BJ (cell line): ENCODE measurements at regions of chr1 and their contacts with region 1.

Region 1: GRCh38 chr1:31644560-31645273 is at the start of gene PEF1:
- DNase-seq: peak; percentile 78
- H3K4me3 ChIP-seq: peak within 1 kb of the TSS; percentile 93
- H3K27me3 ChIP-seq: no peaks in the 10 kb centered on the region
- CTCF ChIP-seq: no peak
- polyA plus RNA-seq, gene PEF1: 111 and 145 TPM in 2 replicates

Region 2: DNA sequence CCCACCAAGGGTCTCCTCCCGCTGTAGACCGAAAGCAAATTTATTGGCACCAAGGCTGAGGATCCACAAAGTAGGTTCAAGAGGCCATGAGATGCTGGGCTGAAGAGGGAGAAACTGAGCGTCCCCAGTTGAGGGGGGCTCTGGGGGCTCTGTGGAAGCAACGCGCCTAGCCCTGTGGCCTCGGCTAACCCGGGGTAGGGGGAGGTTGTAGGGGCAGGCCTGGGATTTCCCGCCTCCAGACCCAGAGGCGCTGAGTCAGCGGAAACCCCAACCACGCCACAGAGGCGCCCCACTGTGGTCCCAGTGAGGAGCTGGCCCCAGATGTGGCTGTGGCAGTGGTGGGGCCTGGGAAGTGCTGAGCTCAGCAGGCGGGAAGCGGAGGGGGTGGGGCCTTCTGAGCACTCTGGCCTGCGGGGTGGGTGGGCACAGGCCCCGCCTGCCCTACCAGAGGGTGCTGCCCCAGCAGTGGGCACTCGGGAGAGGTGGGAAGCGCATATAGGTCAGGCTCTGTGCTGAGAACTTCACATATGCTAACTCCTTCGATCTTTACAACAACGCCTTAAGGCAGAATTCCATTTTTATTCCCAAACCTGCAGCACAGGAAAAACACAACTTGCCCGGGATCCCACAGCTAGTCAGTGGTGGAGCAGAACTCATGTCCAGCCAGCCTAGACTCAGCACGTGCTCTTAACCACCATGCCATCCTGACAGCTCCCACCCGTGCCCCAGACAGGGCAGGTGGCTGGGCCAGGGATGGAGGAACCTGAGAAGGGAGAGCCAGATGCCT is 60.6 kb after region 1 on chr1:
- CTCF ChIA-PET with region 1: interaction called, 4 read pairs
- POLR2A ChIA-PET with region 1: interaction called, 15 read pairs
- DNase-seq: no peak
- H3K4me3 ChIP-seq: no peak overlapping the region
- H3K27me3 ChIP-seq: no peaks in the 10 kb centered on the region
- CTCF ChIP-seq: peak; percentile 55

Region 3: DNA sequence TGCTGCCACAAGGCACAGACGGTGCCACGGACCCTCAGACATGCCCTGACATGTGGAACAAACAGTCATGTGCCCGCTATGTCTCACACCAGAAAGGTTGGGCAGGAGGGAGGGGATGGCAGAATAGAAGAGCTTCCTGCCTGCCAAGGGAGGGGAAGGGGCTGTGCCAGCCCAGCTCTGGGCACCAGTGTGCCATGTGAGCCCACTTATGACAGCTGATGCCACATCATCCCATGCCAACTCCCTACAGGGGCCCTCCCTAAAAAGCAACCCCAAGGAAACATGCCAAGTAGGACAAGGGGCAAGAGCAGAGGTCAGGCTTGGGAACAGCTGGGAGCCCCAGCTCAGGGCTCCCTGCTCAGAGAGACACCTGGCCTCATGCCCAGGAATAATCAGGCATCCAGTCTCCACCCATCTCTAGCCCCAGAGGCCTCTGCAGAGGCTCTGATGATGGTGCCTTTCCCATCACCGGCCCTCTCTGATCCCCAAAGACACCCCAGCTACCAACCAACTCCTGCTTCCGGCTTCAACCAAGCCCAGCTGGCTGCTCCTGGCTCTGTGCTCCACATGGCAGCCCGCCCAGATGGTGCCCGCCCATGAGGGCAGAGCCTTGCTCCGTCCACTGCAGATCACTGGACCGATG is 109.1 kb after region 1 on chr1:
- CTCF ChIA-PET with region 1: no interaction called
- POLR2A ChIA-PET with region 1: interaction called, 10 read pairs
- DNase-seq: no peak
- H3K4me3 ChIP-seq: no peak overlapping the region
- H3K27me3 ChIP-seq: no peaks in the 10 kb centered on the region
- CTCF ChIP-seq: no peak

Region 4: GRCh38 chr1:31923901-31924535 is 279.3 kb after region 1 on chr1:
- CTCF ChIA-PET with region 1: no interaction called
- POLR2A ChIA-PET with region 1: no interaction called
- DNase-seq: no peak
- H3K4me3 ChIP-seq: no peak overlapping the region
- H3K27me3 ChIP-seq: no peaks in the 10 kb centered on the region
- CTCF ChIP-seq: no peak